ENCODE measurements at regions of chr5 and their contacts with region 1.

Region 1: GRCh38 chr5:139593716-139594319 is 32.7 kb downstream of the UBE2D2 start:
- DNase-seq: peak; percentile 20
- ATAC-seq: peak; percentile 83
- H3K4me3 ChIP-seq: no peak overlapping the region
- H3K27ac ChIP-seq: peak overlapping the region; percentile 40; the same call in 1 of the 2 replicates
- H3K4me1 ChIP-seq: peaks cover 14% of the 10 kb centered on the region
- H3K27me3 ChIP-seq: no peaks in the 10 kb centered on the region
- CTCF ChIP-seq: no peak

Region 2: DNA sequence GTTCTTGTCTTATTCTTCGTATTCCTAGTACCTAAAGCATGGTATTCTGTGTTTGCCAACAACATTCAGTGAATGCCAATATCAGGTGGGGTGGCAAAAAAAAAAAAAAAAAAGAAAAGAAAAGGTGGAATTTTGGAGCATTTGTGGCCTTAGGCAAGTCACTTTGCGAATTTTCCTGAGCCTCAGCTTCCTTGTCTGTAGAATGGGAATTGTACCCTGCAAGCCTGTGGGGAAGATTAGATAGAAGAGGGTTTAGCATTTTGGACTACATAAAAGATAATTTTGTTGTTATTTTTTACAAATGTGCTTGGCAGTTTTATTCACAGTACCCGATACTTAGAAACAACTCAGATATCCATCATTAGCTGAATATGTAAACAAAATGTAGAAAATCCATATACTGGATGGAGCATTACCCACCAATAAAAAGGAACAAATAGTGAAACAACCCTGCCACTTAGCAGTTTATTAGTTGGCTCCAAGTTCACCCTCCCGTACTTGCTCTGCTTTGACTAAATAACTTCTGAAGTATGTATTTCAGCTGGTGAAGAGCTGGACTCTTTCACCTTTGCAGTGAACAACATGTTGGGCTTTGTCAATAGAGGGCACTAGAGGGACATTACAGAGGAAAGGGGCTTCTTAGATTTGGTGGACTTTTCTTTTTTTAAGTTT is 19.0 kb before region 1 on chr5:
- CTCF ChIA-PET with region 1: interaction called, 3 read pairs
- POLR2A ChIA-PET with region 1: interaction called, 17 read pairs
- in situ Hi-C with region 1: no loop called
- intact Hi-C with region 1: no loop called
- DNase-seq: no peak
- ATAC-seq: peak; percentile 71
- H3K4me3 ChIP-seq: no peak overlapping the region
- H3K27ac ChIP-seq: no peak overlapping the region
- H3K4me1 ChIP-seq: peaks cover 4% of the 10 kb centered on the region; the same call in 1 of the 2 replicates
- H3K27me3 ChIP-seq: no peaks in the 10 kb centered on the region
- CTCF ChIP-seq: no peak; the same call in 1 of the 2 replicates

Region 3: DNA sequence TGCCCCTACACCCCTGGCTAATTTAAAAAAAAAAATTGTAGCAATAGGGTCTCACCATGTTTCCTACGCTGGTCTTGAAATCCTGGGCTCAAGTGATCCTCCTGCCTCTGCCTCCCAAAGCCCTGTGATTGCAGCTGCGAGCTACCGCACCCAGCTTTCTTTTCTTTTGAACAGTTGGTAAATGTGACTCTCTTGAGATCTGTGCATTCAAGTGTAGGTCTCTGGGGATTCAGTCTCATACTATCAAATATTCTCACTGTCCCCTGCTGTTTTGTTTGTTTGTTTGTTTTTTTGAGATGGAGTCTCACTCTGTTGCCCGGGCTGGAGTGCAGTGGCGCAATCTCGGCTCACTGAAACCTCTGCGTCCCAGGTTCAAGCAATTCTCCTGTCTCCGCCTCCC is 12.1 kb after region 1 on chr5:
- CTCF ChIA-PET with region 1: no interaction called
- POLR2A ChIA-PET with region 1: interaction called, 10 read pairs
- in situ Hi-C with region 1: no loop called
- intact Hi-C with region 1: no loop called
- DNase-seq: no peak
- ATAC-seq: no peak
- H3K4me3 ChIP-seq: no peak overlapping the region
- H3K27ac ChIP-seq: no peak overlapping the region
- H3K4me1 ChIP-seq: no peaks in the 10 kb centered on the region
- H3K27me3 ChIP-seq: no peaks in the 10 kb centered on the region
- CTCF ChIP-seq: no peak

Region 4: DNA sequence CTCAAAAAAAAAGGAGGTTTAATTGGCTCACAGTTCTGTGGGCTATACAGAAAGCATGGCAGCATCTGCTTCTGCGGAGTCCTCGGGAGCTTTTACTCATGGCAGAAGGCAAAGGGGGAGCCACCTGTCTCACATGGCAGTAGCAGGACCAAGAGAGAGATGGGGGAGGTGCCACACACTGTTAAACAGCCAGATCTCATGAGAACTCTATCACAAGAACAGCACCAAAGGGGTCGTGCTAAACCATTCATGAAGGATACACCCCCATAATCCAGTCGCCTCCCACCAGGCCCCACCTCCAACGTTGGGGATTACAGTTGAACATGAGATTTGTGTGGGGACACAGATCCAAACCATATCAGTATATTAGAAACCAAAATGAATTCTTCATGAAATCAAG is 26.0 kb after region 1 on chr5:
- CTCF ChIA-PET with region 1: no interaction called
- POLR2A ChIA-PET with region 1: no interaction called
- in situ Hi-C with region 1: no loop called
- intact Hi-C with region 1: no loop called
- DNase-seq: no peak
- ATAC-seq: no peak
- H3K4me3 ChIP-seq: no peak overlapping the region
- H3K27ac ChIP-seq: no peak overlapping the region
- H3K4me1 ChIP-seq: no peaks in the 10 kb centered on the region
- H3K27me3 ChIP-seq: no peaks in the 10 kb centered on the region
- CTCF ChIP-seq: no peak

Measured in Panc1 (cell line).